ENCODE measurements at regions of chr12 and their contacts with region 1.

Region 1: DNA sequence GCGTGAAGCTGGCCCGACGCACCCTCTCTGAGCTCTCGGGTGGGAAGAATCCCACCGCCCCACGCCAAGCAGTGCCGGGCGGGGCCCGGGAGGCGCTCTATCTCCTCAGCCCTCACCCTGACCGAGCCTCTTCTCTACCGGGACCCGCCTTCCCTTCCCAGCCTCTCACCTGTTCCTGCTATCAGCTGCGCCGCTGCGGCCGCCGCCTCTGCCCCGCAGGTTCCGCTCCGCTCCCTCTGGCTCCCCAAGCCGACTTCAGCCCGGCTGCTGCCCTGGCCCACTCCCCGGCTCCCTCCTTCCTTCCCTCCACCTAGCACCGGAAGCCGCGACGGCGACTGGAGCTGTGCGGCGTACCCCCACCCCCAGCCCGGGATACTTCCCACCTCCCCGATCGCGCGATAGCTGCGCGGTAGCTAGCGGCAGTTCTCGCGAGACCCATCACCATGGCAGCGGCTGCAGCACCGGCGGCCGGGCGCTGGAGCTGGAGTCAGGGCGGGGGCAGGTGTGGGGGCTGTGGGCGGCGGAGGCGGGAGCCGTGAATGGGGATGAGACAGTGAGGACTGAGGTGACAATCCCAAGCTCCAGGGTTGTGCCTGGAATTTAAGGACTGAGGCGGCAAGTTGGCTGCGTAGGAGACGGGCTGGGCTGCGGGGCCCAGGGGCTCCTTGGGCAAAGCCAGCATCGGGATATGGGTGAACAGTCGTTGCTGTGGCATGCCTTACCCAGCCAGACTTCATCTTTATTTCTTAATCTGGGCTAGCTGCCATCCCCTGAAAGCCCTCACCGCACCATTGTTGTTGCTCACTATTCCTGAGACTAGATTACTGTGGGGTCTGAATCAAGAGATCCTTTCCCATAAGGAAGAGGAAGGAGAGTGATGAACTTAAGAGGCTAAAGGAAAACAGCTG is at the start of gene ARF3:
- DNase-seq: peak; percentile 88
- H3K4me3 ChIP-seq: peak within 1 kb of the TSS; percentile 82 to 97 (median 96)
- H3K27ac ChIP-seq: peak within 1 kb of the TSS; percentile 78
- H3K4me1 ChIP-seq: peaks cover 28% of the 10 kb centered on the region
- H3K27me3 ChIP-seq: no peaks in the 10 kb centered on the region
- CTCF ChIP-seq: no peak
- total RNA-seq, gene ARF3: 87.9 to 201 TPM

Region 2: GRCh38 chr12:48977315-48978281 is 20.2 kb after region 1 on chr12:
- CTCF ChIA-PET with region 1: no interaction called
- dilution Hi-C with region 1: no loop called
- in situ Hi-C with region 1: no loop called
- intact Hi-C with region 1: loop called (anchors 2 kb)
- DNase-seq: peak; percentile 35
- H3K4me3 ChIP-seq: no peak overlapping the region
- H3K27ac ChIP-seq: no peak overlapping the region
- H3K4me1 ChIP-seq: peaks cover 36% of the 10 kb centered on the region
- H3K27me3 ChIP-seq: peaks cover 41% of the 10 kb centered on the region
- CTCF ChIP-seq: peak; percentile 50 to 83

Region 3: GRCh38 chr12:49720214-49720613 is 762.8 kb after region 1 on chr12:
- CTCF ChIA-PET with region 1: no interaction called
- dilution Hi-C with region 1: no loop called
- in situ Hi-C with region 1: no loop called
- intact Hi-C with region 1: no loop called
- DNase-seq: no peak
- H3K4me3 ChIP-seq: no peak overlapping the region
- H3K27ac ChIP-seq: no peak overlapping the region
- H3K4me1 ChIP-seq: no peaks in the 10 kb centered on the region
- H3K27me3 ChIP-seq: no peaks in the 10 kb centered on the region
- CTCF ChIP-seq: no peak

Measured in mammary epithelial cell (primary cell).